Activated T-helper 1 cell treated with anti-CD3 and anti-CD28 coated beads, Interleukin-12 subunit alpha, Interleukin-12 subunit beta, Interleukin-2, Interleukin-4 antibody, amounts not matched to agents 30 ng/mL and 10 ng/mL and 1 ng/mL, durations not matched to agents 14 hours and 24 hours and 36 hours (primary cell): ENCODE measurements at regions of chr14 and their contacts with region 1.

Region 1: GRCh38 chr14:76151398-76152339 is at the start of gene GPATCH2L:
- DNase-seq: peak; percentile 95
- H3K4me3 Mint-ChIP-seq: peak within 1 kb of the TSS; percentile 94
- H3K27ac Mint-ChIP-seq: peak within 1 kb of the TSS; percentile 94
- H3K4me1 Mint-ChIP-seq: peaks cover 54% of the 10 kb centered on the region
- H3K27me3 Mint-ChIP-seq: peaks cover 11% of the 10 kb centered on the region
- total RNA-seq, gene GPATCH2L: 56.1 and 60.9 TPM in 2 replicates

Region 2: DNA sequence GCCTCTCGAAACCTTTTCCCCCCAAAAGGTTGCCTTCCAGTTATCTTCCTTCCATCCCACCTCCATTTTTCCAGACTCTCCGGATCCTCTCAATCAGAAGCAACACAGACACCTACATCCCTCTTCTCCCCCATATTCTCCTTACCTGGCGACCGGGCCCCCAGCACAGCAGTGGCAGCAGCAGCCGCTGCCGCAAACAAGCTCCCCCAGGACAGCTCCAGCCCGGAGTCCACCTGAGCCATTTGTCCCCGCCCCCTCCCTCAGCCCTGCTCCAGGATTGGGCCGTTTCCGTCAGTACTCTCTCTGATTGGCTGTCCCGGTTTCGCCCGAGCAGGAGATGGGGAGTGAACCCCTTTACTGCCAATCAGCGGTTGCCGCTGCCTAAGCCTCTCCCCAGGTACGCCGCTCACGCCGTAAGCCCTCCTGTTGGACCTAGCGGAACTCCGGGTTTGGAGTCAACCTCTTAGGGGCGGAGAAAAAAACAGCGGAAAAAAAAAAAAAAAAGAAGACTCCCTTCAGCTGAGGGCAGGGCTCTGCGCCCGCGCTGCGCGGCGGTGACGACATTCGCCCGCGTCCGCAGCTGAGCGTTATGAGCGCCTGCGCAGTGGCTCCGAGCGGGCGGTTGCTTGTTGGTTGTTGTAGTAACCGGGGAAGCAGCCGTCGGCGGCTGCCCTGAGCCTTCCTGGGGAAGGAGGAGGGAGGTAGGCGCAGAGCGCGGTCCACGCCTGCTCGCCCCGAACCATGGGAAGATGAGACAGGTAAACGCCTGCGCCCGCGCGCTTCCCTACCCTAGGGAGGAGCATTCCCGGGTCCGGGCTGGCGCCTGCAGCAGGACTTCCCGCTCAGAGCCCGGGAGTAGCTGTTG is 490.8 kb before region 1 on chr14 and contains the starts of genes ERG28 and TTLL5:
- intact Hi-C with region 1: loop called (anchors 5 kb)
- DNase-seq: peak; percentile 97
- H3K4me3 Mint-ChIP-seq: peak within 1 kb of the TSS; percentile 100
- H3K27ac Mint-ChIP-seq: peak within 1 kb of the TSS; percentile 94
- H3K4me1 Mint-ChIP-seq: peaks cover 38% of the 10 kb centered on the region
- H3K27me3 Mint-ChIP-seq: no peaks in the 10 kb centered on the region
- total RNA-seq, gene ERG28: 17.5 and 17.8 TPM in 2 replicates
- total RNA-seq, gene TTLL5: 36.2 and 39.0 TPM in 2 replicates

Region 3: DNA sequence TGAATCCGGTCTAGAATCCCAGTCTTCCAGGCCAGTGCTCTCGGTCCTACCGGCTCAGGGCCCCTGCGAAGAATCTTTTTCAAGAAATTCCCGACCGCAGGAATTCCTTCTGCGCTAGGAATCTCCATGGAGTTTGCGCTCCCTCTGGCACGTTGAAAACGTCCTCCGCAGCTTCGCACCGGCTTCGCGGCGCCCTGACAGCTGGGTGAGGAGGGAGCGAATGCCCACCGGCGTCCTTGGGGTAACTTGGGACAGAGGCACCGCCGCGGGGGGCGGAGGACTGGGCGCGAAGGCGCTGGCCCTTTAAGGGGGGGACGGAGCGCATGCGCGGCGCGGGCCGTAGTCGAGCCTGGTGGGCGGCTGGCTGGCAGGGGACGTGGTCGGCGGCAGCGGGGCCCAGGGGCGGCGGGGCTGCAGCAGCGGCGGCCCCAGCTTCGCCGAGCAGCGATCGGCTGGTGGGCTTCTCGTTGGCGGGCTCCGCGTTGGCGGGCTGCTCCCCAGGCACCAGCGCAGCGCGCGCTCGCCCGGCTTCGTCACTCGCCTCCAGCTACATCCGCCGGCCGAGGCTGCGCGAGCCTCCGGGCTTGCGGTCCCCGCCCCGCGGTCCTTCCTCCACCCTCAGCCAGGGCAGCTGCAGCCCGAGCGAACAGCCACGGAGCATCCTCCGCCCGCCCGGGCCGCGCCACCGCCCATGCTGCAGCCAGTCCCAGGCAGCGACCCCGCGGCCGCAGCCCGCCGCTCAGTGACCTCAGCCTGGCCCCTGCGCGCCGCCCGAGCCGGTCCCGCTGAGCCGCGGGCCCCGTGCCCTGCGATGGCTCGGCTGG is 609.7 kb after region 1 on chr14 and contains the start of gene VASH1:
- intact Hi-C with region 1: loop called (anchors 5 kb)
- DNase-seq: peak; percentile 56
- H3K4me3 Mint-ChIP-seq: peak within 1 kb of the TSS; percentile 82
- H3K27ac Mint-ChIP-seq: no peak within 1 kb of the TSS
- H3K4me1 Mint-ChIP-seq: peaks cover 24% of the 10 kb centered on the region
- H3K27me3 Mint-ChIP-seq: peaks cover 59% of the 10 kb centered on the region
- total RNA-seq, gene VASH1: 6.1 and 7.1 TPM in 2 replicates